CD4-positive, alpha-beta T cell (primary cell): ENCODE measurements at regions of chr4 and their contacts with region 1.

Region 1: DNA sequence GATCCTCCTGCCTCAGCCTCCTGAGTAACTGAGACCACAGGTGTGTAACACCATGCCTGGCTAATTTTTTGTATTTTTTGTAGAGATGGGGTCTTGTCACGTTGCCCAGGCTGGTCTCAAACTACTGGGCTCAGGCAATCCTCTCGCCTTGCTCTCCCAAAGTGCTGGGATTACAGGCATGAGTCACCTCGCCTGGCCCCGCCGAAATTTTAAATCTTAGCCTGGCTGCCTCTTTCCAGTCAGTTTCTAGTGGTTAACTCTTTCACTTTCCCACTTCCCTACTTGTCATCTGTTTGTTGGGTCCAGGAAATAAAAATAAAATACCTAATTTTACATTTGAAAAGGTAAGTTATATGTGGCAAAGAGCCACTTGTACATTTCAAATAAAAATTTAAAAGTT is 62.4 kb downstream of the TMEM165 start:
- DNase-seq: no peak
- ATAC-seq: no peak
- H3K4me3 ChIP-seq: no peak overlapping the region
- H3K4me3 Mint-ChIP-seq: no peak overlapping the region
- H3K27ac ChIP-seq: no peak overlapping the region
- H3K27ac Mint-ChIP-seq: no peak overlapping the region
- H3K4me1 ChIP-seq: no peaks in the 10 kb centered on the region
- H3K4me1 Mint-ChIP-seq: no peaks in the 10 kb centered on the region
- H3K27me3 ChIP-seq: no peaks in the 10 kb centered on the region
- H3K27me3 Mint-ChIP-seq: no peaks in the 10 kb centered on the region
- CTCF ChIP-seq: no peak

Region 2: GRCh38 chr4:55503164-55503563 is 45.0 kb after region 1 on chr4:
- CTCF ChIA-PET with region 1: no interaction called
- POLR2A ChIA-PET with region 1: no interaction called
- intact Hi-C with region 1: no loop called
- DNase-seq: no peak
- ATAC-seq: no peak
- H3K4me3 ChIP-seq: no peak overlapping the region
- H3K4me3 Mint-ChIP-seq: no peak overlapping the region
- H3K27ac ChIP-seq: no peak overlapping the region
- H3K27ac Mint-ChIP-seq: no peak overlapping the region
- H3K4me1 ChIP-seq: no peaks in the 10 kb centered on the region
- H3K4me1 Mint-ChIP-seq: peaks cover 4% of the 10 kb centered on the region
- H3K27me3 ChIP-seq: no peaks in the 10 kb centered on the region
- H3K27me3 Mint-ChIP-seq: no peaks in the 10 kb centered on the region
- CTCF ChIP-seq: no peak

Region 3: DNA sequence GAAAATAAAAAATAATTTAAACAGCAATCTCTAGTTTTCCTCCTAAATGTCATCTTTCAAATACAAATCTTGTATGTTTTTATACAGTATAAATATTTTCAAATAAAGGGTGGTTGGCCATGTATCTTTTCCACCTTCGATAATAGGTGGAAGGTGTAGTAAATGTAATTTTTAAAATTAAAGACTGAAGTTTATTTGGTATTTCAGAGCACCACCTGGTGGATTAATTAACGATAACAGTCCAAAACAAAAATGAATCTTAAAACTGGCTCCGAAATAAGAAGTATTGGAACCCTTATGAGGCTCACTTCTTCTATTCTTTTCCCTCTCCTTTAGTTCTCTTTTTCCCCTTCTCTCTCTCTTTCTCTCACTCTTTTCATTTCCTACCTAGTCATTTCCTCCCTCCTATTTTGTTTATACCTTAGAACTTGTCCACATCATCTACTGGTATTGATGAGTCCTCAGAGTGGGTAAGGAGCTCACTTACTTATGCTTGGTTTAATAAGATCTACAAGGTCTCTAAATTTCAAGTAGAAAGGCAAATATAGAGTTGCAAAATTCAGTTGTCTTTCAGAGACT is 278.5 kb after region 1 on chr4:
- CTCF ChIA-PET with region 1: no interaction called
- POLR2A ChIA-PET with region 1: no interaction called
- intact Hi-C with region 1: loop called in 1 of 2 experiments (anchors 10 kb)
- DNase-seq: peak in 2 of 14 experiments; percentile 8 to 11
- ATAC-seq: no peak
- H3K4me3 ChIP-seq: no peak overlapping the region
- H3K4me3 Mint-ChIP-seq: no peak overlapping the region
- H3K27ac ChIP-seq: no peak overlapping the region
- H3K27ac Mint-ChIP-seq: no peak overlapping the region
- H3K4me1 ChIP-seq: no peaks in the 10 kb centered on the region
- H3K4me1 Mint-ChIP-seq: no peaks in the 10 kb centered on the region
- H3K27me3 ChIP-seq: peaks cover 0 to 11% of the 10 kb centered on the region in 2 experiments
- H3K27me3 Mint-ChIP-seq: peaks cover 54% of the 10 kb centered on the region
- CTCF ChIP-seq: no peak